PC-9 (cell line): ENCODE measurements at regions of chr3 and their contacts with region 1.

Region 1: DNA sequence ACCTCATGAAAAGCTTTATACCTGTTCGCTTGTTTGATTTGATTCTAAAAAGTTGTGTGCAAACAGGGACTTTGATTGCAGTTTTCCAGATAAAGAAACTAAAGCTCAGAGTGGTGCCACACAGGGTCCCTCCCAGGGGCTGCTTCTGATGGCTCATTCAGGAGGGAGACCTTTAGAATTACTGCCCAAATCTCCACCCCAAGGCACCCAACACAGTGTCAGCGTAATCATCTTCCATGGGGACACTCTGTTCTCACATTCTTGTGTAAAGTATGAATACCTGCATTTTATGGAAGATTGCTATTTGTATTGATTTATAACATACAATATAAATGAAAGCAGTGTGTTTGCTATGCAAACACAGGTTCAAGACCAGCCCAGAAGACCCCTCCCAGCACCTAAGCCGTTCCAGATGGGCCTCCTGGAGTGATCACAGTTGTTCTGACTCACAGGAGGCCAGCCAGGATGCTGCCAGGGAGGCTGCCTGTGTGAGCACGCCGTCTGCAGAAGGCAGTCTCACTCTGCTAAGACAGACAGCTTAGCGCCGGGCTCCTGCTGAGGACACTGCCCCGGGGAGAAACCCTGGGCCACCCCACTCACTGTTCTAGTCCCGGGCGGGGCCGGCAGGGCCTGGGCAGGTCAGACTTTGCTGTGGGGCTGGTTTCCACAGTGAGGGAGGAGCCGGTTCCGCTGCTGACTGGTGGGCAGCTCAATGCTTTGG is 185.6 kb downstream of the FAM43A start:
- DNase-seq: peak; percentile 83 to 94
- H3K4me3 ChIP-seq: peak overlapping the region; percentile 14; the same call in 1 of the 2 replicates
- H3K27ac ChIP-seq: peak overlapping the region; percentile 91
- H3K4me1 ChIP-seq: peaks cover 50% of the 10 kb centered on the region
- H3K27me3 ChIP-seq: no peaks in the 10 kb centered on the region
- CTCF ChIP-seq: peak; percentile 20; the same call in 1 of the 2 replicates

Region 2: DNA sequence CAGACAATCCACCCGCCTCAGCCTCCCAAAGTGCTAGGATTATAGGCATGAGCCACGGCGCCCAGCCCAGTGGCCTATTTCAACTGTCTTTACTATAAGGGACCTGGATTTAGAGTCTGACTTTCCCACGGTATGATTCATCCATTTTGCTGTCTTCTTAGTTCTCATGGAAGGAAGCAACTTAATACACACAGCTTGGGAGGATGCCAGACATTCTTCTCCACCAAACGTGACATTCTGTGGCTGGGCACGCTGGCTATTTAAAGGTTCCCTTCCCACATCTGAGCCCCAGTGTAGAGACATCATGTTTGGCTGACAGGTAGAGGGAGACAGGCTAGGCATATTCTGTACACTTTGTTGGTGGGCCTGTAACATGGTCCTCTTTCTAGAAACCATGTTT is 159.4 kb before region 1 on chr3:
- CTCF ChIA-PET with region 1: no interaction called
- POLR2A ChIA-PET with region 1: interaction called, 4 read pairs
- intact Hi-C with region 1: loop called (anchors 1 kb)
- DNase-seq: peak; percentile 89 to 99
- H3K4me3 ChIP-seq: no peak overlapping the region
- H3K27ac ChIP-seq: peak overlapping the region; percentile 54
- H3K4me1 ChIP-seq: peaks cover 47% of the 10 kb centered on the region
- H3K27me3 ChIP-seq: no peaks in the 10 kb centered on the region
- CTCF ChIP-seq: no peak

Region 3: GRCh38 chr3:194769020-194769643 is 102.2 kb before region 1 on chr3:
- CTCF ChIA-PET with region 1: interaction called, 3 read pairs
- POLR2A ChIA-PET with region 1: no interaction called
- intact Hi-C with region 1: loop called (anchors 1 kb)
- DNase-seq: peak; percentile 96 to 97
- H3K4me3 ChIP-seq: peak overlapping the region; percentile 50; the same call in 1 of the 2 replicates
- H3K27ac ChIP-seq: no peak overlapping the region
- H3K4me1 ChIP-seq: peaks cover 26% of the 10 kb centered on the region
- H3K27me3 ChIP-seq: no peaks in the 10 kb centered on the region
- CTCF ChIP-seq: 0 out of 2 replicates have a peak, but pooled peaks have one; percentile 28

Region 4: DNA sequence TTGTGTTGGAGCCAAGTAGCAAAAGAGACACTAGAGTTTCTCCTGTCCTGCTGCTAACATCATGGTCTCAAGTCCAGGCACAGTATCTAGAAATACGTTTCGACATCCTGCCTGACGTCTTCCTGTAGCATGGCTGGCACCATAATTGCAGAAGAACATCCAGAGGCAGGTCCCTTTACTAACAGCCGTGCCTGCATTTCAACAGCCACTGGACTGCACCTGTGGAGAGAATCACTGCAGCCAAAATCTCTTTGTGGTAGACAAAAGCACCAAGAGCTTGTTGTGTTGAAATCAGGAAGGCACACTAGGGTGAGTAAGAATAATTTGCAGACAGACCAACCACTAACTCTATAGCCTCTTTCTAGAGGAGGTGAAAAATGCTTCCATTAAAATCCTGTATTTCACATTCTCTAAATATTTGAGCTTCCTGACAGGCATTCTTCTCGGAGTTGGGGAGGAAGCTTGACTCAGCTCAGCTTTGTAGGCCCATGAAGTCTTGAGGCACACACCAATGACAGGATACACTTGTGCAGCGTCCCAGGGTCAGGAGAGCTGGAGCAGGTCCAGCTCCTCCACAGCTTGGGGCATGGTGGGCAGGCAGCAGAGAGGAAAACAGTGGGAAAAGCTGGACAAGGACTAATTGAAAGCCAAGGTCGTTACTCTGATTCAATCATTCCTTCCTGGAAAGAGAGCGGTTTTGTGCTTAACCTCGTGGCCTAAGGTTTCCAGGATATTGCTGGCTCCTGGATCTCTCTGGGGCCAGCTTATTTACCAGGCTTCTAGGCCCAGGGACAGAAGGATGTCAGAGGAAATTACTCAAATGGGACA is 59.3 kb after region 1 on chr3:
- CTCF ChIA-PET with region 1: no interaction called
- POLR2A ChIA-PET with region 1: no interaction called
- intact Hi-C with region 1: loop called (anchors 2 kb)
- DNase-seq: peak; percentile 47 to 85
- H3K4me3 ChIP-seq: no peak overlapping the region
- H3K27ac ChIP-seq: peak overlapping the region; percentile 20
- H3K4me1 ChIP-seq: peaks cover 41% of the 10 kb centered on the region
- H3K27me3 ChIP-seq: no peaks in the 10 kb centered on the region
- CTCF ChIP-seq: no peak

Region 5: GRCh38 chr3:195030791-195031321 is 159.6 kb after region 1 on chr3:
- CTCF ChIA-PET with region 1: no interaction called
- POLR2A ChIA-PET with region 1: interaction called, 3 read pairs
- intact Hi-C with region 1: loop called (anchors 1 kb)
- DNase-seq: peak; percentile 98
- H3K4me3 ChIP-seq: peak overlapping the region; percentile 28; the same call in 1 of the 2 replicates
- H3K27ac ChIP-seq: peak overlapping the region; percentile 83
- H3K4me1 ChIP-seq: peaks cover 53% of the 10 kb centered on the region
- H3K27me3 ChIP-seq: no peaks in the 10 kb centered on the region
- CTCF ChIP-seq: no peak

Region 6: GRCh38 chr3:195187609-195188425 is 316.5 kb after region 1 on chr3:
- CTCF ChIA-PET with region 1: no interaction called
- POLR2A ChIA-PET with region 1: interaction called, 26 read pairs
- intact Hi-C with region 1: no loop called
- DNase-seq: no peak
- H3K4me3 ChIP-seq: no peak overlapping the region
- H3K27ac ChIP-seq: no peak overlapping the region
- H3K4me1 ChIP-seq: peaks cover 23% of the 10 kb centered on the region
- H3K27me3 ChIP-seq: no peaks in the 10 kb centered on the region
- CTCF ChIP-seq: no peak